Caco-2 (cell line): ENCODE measurements at regions of chr2 and their contacts with region 1.

Region 1: GRCh38 chr2:147082850-147083522 is 761.8 kb upstream of the ACVR2A start:
- DNase-seq: peak; percentile 65 to 80
- H3K4me3 ChIP-seq: no peak overlapping the region
- H3K4me3 Mint-ChIP-seq: no peak overlapping the region
- H3K27ac Mint-ChIP-seq: no peak overlapping the region
- H3K4me1 ChIP-seq: no peaks in the 10 kb centered on the region; the same call in 1 of the 2 replicates
- H3K4me1 Mint-ChIP-seq: peaks cover 12% of the 10 kb centered on the region
- H3K27me3 ChIP-seq: no peaks in the 10 kb centered on the region
- H3K27me3 Mint-ChIP-seq: no peaks in the 10 kb centered on the region
- CTCF ChIP-seq: peak; percentile 86 to 90

Region 2: DNA sequence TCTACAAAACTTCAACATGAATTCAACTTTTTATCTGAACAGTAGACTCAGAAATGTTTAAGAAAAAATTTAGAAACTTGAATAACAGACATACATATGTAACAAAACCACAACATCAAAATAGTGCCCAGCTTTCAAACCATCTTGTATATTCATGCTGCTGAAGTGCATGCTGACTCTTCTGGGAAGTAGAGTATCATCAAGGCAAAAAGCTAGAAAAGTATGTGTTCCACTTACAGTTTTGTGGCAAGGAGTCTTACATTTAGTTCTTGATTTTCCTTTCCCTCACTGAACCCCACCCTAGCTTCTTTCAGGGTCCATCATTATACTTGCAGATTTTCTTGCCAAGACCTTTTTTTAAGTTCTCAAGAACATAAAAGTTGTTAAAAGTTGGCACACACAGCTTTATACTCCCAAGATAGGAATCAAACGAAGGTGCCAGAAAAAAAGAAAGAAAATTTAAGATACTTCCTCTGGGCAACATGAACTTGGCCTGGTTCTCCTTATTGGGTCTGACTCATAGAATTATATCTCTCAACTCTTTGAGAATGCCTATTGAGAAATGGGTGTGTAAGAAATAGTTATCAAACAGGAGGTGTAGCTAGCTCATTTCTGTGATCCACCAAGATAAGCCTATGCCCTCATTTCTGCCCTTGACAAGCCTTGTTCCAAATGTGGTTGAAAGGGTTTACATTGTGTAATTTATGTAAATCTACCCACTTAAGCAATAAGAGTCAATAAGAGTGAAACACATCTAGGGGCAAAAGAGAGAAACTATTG is 94.3 kb after region 1 on chr2:
- CTCF ChIA-PET with region 1: interaction called, 3 read pairs
- POLR2A ChIA-PET with region 1: no interaction called
- intact Hi-C with region 1: loop called (anchors 2 kb)
- DNase-seq: no peak
- H3K4me3 ChIP-seq: no peak overlapping the region
- H3K4me3 Mint-ChIP-seq: no peak overlapping the region
- H3K27ac Mint-ChIP-seq: no peak overlapping the region
- H3K4me1 ChIP-seq: peaks cover 21% of the 10 kb centered on the region
- H3K4me1 Mint-ChIP-seq: peaks cover 11% of the 10 kb centered on the region
- H3K27me3 ChIP-seq: no peaks in the 10 kb centered on the region
- H3K27me3 Mint-ChIP-seq: no peaks in the 10 kb centered on the region
- CTCF ChIP-seq: no peak

Region 3: GRCh38 chr2:147297820-147298219 is 214.8 kb after region 1 on chr2:
- CTCF ChIA-PET with region 1: no interaction called
- POLR2A ChIA-PET with region 1: no interaction called
- intact Hi-C with region 1: no loop called
- DNase-seq: no peak
- H3K4me3 ChIP-seq: no peak overlapping the region
- H3K4me3 Mint-ChIP-seq: no peak overlapping the region
- H3K27ac Mint-ChIP-seq: no peak overlapping the region
- H3K4me1 ChIP-seq: no peaks in the 10 kb centered on the region
- H3K4me1 Mint-ChIP-seq: no peaks in the 10 kb centered on the region
- H3K27me3 ChIP-seq: no peaks in the 10 kb centered on the region
- H3K27me3 Mint-ChIP-seq: no peaks in the 10 kb centered on the region
- CTCF ChIP-seq: no peak

Region 4: GRCh38 chr2:147331790-147332419 is 248.9 kb after region 1 on chr2:
- CTCF ChIA-PET with region 1: interaction called, 4 read pairs
- POLR2A ChIA-PET with region 1: no interaction called
- intact Hi-C with region 1: loop called (anchors 1 kb)
- DNase-seq: peak in 1 of 2 experiments; percentile 44
- H3K4me3 ChIP-seq: no peak overlapping the region
- H3K4me3 Mint-ChIP-seq: no peak overlapping the region
- H3K27ac Mint-ChIP-seq: no peak overlapping the region
- H3K4me1 ChIP-seq: no peaks in the 10 kb centered on the region; the same call in 1 of the 2 replicates
- H3K4me1 Mint-ChIP-seq: no peaks in the 10 kb centered on the region
- H3K27me3 ChIP-seq: no peaks in the 10 kb centered on the region
- H3K27me3 Mint-ChIP-seq: no peaks in the 10 kb centered on the region
- CTCF ChIP-seq: peak; percentile 47 to 51

Region 5: GRCh38 chr2:147456779-147457178 is 373.8 kb after region 1 on chr2:
- CTCF ChIA-PET with region 1: no interaction called
- POLR2A ChIA-PET with region 1: no interaction called
- intact Hi-C with region 1: loop called (anchors 10 kb)
- DNase-seq: no peak
- H3K4me3 ChIP-seq: no peak overlapping the region
- H3K4me3 Mint-ChIP-seq: no peak overlapping the region
- H3K27ac Mint-ChIP-seq: no peak overlapping the region
- H3K4me1 ChIP-seq: no peaks in the 10 kb centered on the region
- H3K4me1 Mint-ChIP-seq: no peaks in the 10 kb centered on the region
- H3K27me3 ChIP-seq: no peaks in the 10 kb centered on the region
- H3K27me3 Mint-ChIP-seq: no peaks in the 10 kb centered on the region
- CTCF ChIP-seq: no peak